Esophagus muscularis mucosa (tissue), 4 donors: ENCODE measurements at regions of chr14 and their contacts with region 1.

Region 1: GRCh38 chr14:35140718-35141581 is 18.6 kb downstream of the PRORP start:
- DNase-seq: no peak
- H3K4me3 ChIP-seq: no peak overlapping the region
- H3K27ac ChIP-seq: no peak overlapping the region
- H3K4me1 ChIP-seq: no peaks in the 10 kb centered on the region
- H3K27me3 ChIP-seq: no peaks in the 10 kb centered on the region
- CTCF ChIP-seq: peak in 1 of 3 experiments; percentile 35
- EP300 ChIP-seq: no peak
- POLR2A ChIP-seq: no peak

Region 2: DNA sequence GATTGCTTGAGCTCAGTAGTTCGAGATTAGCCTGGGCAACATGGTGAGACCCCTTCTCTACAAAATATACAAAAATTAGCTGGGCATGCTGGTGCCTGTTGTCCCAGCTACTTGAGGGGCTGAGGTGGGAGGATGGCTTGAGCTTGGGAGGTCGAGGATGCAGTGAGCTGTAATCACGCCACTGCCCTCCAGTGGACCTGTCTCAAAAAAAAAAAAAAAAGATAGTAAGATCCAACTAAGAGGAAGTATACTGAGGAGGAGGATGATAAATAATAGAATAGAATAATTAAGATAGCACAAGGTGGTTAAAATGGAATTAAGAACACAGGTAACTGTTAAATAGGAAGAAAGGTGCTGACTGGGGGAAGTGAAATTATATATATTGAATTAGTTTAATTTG is 228.8 kb before region 1 on chr14:
- intact Hi-C with region 1: no loop called
- DNase-seq: no peak
- H3K4me3 ChIP-seq: no peak overlapping the region
- H3K27ac ChIP-seq: no peak overlapping the region
- H3K4me1 ChIP-seq: no peaks in the 10 kb centered on the region
- H3K27me3 ChIP-seq: no peaks in the 10 kb centered on the region
- CTCF ChIP-seq: no peak
- EP300 ChIP-seq: no peak
- POLR2A ChIP-seq: no peak

Region 3: GRCh38 chr14:35414365-35414764 is 273.4 kb after region 1 on chr14:
- intact Hi-C with region 1: loop called (anchors 2 kb)
- DNase-seq: no peak
- H3K4me3 ChIP-seq: no peak overlapping the region
- H3K27ac ChIP-seq: peak overlapping the region; percentile 35 to 70 (median 52)
- H3K4me1 ChIP-seq: peaks cover 24 to 37% (median 35%) of the 10 kb centered on the region in 4 donors
- H3K27me3 ChIP-seq: no peaks in the 10 kb centered on the region
- CTCF ChIP-seq: no peak
- EP300 ChIP-seq: no peak
- POLR2A ChIP-seq: no peak